H1 (cell line): ENCODE measurements at regions of chr3 and their contacts with region 1.

Region 1: GRCh38 chr3:128322066-128323022 is 144.3 kb downstream of the DNAJB8 start:
- DNase-seq: peak; percentile 17 to 85
- H3K4me3 ChIP-seq: no peak overlapping the region
- H3K27ac ChIP-seq: no peak overlapping the region
- H3K4me1 ChIP-seq: peaks cover 0 to 4% (median 0%) of the 10 kb centered on the region in 4 experiments; a peak in 2 of 7 replicates
- H3K27me3 ChIP-seq: no peaks in the 10 kb centered on the region
- CTCF ChIP-seq: peak in 2 of 3 experiments; percentile 89 to 90; a peak in 3 of 4 replicates
- EP300 ChIP-seq: no peak
- POLR2A ChIP-seq: no peak
- RAD21 ChIP-seq: peak; percentile 76 to 86

Region 2: GRCh38 chr3:127908202-127908601 is 414.1 kb before region 1 on chr3:
- CTCF ChIA-PET with region 1: no interaction called
- POLR2A ChIA-PET with region 1: no interaction called
- DNase-seq: no peak
- H3K4me3 ChIP-seq: no peak overlapping the region
- H3K27ac ChIP-seq: no peak overlapping the region
- H3K4me1 ChIP-seq: no peaks in the 10 kb centered on the region
- H3K27me3 ChIP-seq: no peaks in the 10 kb centered on the region
- CTCF ChIP-seq: no peak
- EP300 ChIP-seq: no peak
- POLR2A ChIP-seq: no peak
- RAD21 ChIP-seq: no peak

Region 3: GRCh38 chr3:128217702-128218547 is 104.4 kb before region 1 on chr3:
- CTCF ChIA-PET with region 1: interaction called, 108 read pairs
- POLR2A ChIA-PET with region 1: no interaction called
- DNase-seq: no peak
- H3K4me3 ChIP-seq: no peak overlapping the region
- H3K27ac ChIP-seq: no peak overlapping the region
- H3K4me1 ChIP-seq: peaks cover 2 to 5% (median 4%) of the 10 kb centered on the region in 4 experiments; a peak in 3 of 7 replicates
- H3K27me3 ChIP-seq: no peaks in the 10 kb centered on the region; a peak in 1 of 7 replicates
- CTCF ChIP-seq: no peak
- EP300 ChIP-seq: no peak
- POLR2A ChIP-seq: no peak
- RAD21 ChIP-seq: no peak

Region 4: GRCh38 chr3:128242818-128243601 is 79.3 kb before region 1 on chr3:
- CTCF ChIA-PET with region 1: interaction called, 18 read pairs
- POLR2A ChIA-PET with region 1: no interaction called
- DNase-seq: peak in 1 of 2 experiments; percentile 29
- H3K4me3 ChIP-seq: no peak overlapping the region
- H3K27ac ChIP-seq: no peak overlapping the region
- H3K4me1 ChIP-seq: peaks cover 0 to 5% (median 0%) of the 10 kb centered on the region in 4 experiments; a peak in 1 of 7 replicates
- H3K27me3 ChIP-seq: no peaks in the 10 kb centered on the region
- CTCF ChIP-seq: no peak
- EP300 ChIP-seq: no peak
- POLR2A ChIP-seq: no peak
- RAD21 ChIP-seq: no peak

Region 5: GRCh38 chr3:128278761-128279600 is 43.4 kb before region 1 on chr3:
- CTCF ChIA-PET with region 1: interaction called, 48 read pairs
- POLR2A ChIA-PET with region 1: no interaction called
- DNase-seq: peak in 1 of 2 experiments; percentile 59
- H3K4me3 ChIP-seq: no peak overlapping the region
- H3K27ac ChIP-seq: no peak overlapping the region
- H3K4me1 ChIP-seq: peaks cover 31 to 75% (median 47%) of the 10 kb centered on the region in 4 experiments
- H3K27me3 ChIP-seq: peaks cover 0 to 12% (median 7%) of the 10 kb centered on the region in 4 experiments; a peak in 3 of 7 replicates
- CTCF ChIP-seq: peak in 2 of 3 experiments; percentile 4 to 12; a peak in 1 of 4 replicates
- EP300 ChIP-seq: no peak
- POLR2A ChIP-seq: no peak
- RAD21 ChIP-seq: peak in 1 of 2 experiments; percentile 17; a peak in 1 of 4 replicates

Region 6: DNA sequence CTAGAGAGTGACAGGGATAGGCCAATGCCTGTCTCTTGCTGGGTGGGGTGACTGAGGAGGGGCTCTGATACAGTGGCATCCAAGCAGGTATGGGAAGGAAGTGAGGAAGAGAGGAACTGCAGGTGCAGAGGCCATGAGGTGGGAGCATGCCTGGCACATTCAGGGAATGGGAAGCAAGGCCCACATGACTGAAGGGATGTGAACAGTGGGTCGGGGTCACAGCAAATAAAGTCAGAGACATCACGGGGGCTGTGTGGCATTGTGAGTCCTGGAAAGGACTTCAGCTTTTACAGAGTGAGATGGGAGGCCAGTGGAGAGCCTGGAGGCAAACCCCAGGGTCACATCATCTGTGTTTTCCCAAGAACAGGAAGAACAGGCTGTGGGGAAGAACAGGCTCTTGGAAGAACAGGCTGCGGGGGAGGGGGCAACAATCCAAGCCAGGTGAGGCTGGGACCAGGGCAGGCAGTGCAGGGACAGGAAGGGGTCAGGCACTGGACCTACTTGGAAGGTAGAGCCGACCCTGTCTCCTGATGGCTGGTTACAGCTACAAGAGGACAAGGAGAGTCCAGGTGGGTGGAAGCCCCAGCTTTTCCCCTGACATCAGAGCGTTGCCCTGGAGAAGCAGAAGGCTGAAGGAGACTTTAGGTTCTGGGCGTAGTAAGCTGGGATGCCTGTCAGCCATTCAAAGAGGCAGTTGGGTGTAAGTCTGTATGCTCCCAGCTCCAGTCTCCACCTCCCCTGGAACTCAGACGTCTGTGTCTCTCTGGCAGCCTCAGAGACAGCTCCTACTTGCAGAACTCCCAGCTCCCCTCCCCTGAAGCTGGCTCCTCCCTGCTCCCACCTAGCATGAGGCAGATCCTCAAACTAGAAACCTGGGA is 13.2 kb after region 1 on chr3:
- CTCF ChIA-PET with region 1: interaction called, 42 read pairs
- POLR2A ChIA-PET with region 1: interaction called, 3 read pairs
- DNase-seq: no peak
- H3K4me3 ChIP-seq: no peak overlapping the region
- H3K27ac ChIP-seq: no peak overlapping the region
- H3K4me1 ChIP-seq: peaks cover 0 to 6% (median 3%) of the 10 kb centered on the region in 4 experiments; a peak in 4 of 7 replicates
- H3K27me3 ChIP-seq: no peaks in the 10 kb centered on the region
- CTCF ChIP-seq: no peak
- EP300 ChIP-seq: no peak
- POLR2A ChIP-seq: no peak
- RAD21 ChIP-seq: no peak

Region 7: GRCh38 chr3:128369864-128370642 is 47.7 kb after region 1 on chr3:
- CTCF ChIA-PET with region 1: interaction called, 11 read pairs
- POLR2A ChIA-PET with region 1: no interaction called
- DNase-seq: no peak
- H3K4me3 ChIP-seq: no peak overlapping the region
- H3K27ac ChIP-seq: no peak overlapping the region
- H3K4me1 ChIP-seq: peaks cover 0 to 6% (median 2%) of the 10 kb centered on the region in 4 experiments; a peak in 3 of 7 replicates
- H3K27me3 ChIP-seq: no peaks in the 10 kb centered on the region; a peak in 2 of 7 replicates
- CTCF ChIP-seq: peak in 2 of 3 experiments; percentile 18 to 45; a peak in 2 of 4 replicates
- EP300 ChIP-seq: no peak
- POLR2A ChIP-seq: no peak
- RAD21 ChIP-seq: peak; percentile 12 to 21; a peak in 2 of 4 replicates